Vagina (tissue), 2 donors: ENCODE measurements at regions of chr2 and their contacts with region 1.

Region 1: GRCh38 chr2:96509114-96509846 is 4.1 kb upstream of the NEURL3 start:
- DNase-seq: peak; percentile 86 to 96
- H3K4me3 ChIP-seq: no peak overlapping the region
- H3K27ac ChIP-seq: no peak overlapping the region
- H3K4me1 ChIP-seq: peaks cover 24% of the 10 kb centered on the region
- H3K27me3 ChIP-seq: no peaks in the 10 kb centered on the region
- CTCF ChIP-seq: peak; percentile 71 to 95 (median 88)
- POLR2A ChIP-seq: no peak

Region 2: GRCh38 chr2:96291751-96292150 is 217.5 kb before region 1 on chr2:
- intact Hi-C with region 1: loop called (anchors 10 kb)
- DNase-seq: no peak
- H3K4me3 ChIP-seq: no peak overlapping the region
- H3K27ac ChIP-seq: no peak overlapping the region
- H3K4me1 ChIP-seq: no peaks in the 10 kb centered on the region
- H3K27me3 ChIP-seq: no peaks in the 10 kb centered on the region
- CTCF ChIP-seq: no peak
- POLR2A ChIP-seq: no peak

Region 3: DNA sequence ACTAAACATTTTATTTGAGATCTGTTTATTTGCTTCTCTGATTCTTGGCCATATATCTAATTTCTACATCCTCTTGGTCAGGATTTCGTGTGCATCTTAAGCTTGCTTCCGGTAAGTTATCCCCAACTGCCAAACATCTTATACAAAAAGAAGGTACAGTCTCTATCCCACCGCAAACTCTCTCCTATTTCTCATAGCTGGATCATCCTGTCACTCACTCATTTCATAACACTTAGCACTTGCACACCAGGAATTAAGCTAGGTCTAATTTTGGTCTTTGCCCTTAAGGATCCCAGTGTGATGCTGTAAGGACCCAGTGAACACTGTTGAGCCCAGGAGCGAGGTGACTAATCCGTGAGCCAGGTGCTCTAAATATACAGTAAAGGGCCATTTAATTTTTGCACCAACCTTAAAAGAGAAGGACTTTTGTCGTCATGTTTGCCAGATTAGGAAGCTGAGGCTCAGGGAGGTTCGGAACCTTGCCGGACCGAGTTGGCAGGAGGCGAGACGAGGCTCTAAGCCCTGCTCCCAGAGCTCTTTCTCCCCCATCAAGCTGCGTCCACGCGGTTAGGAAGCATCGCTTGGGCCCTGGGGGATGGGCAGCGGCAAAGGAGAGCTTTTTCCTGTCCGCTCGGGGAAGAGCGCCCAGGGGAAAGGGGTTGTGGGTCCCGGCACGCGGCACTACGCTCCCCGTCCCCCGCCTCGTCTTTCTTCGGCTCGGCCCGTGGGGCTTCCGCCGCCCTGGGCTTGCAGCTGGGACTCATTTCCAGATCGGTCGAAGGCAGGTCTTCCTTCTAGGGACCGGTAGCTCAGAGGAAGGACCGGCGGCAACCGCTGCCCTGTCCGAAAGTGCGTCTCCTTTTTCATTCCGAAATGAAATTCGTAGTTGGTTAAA is 188.3 kb before region 1 on chr2:
- intact Hi-C with region 1: no loop called
- DNase-seq: no peak
- H3K4me3 ChIP-seq: peak overlapping the region; percentile 50 to 54
- H3K27ac ChIP-seq: peak overlapping the region; percentile 9
- H3K4me1 ChIP-seq: peaks cover 30% of the 10 kb centered on the region
- H3K27me3 ChIP-seq: no peaks in the 10 kb centered on the region
- CTCF ChIP-seq: no peak
- POLR2A ChIP-seq: no peak

Region 4: DNA sequence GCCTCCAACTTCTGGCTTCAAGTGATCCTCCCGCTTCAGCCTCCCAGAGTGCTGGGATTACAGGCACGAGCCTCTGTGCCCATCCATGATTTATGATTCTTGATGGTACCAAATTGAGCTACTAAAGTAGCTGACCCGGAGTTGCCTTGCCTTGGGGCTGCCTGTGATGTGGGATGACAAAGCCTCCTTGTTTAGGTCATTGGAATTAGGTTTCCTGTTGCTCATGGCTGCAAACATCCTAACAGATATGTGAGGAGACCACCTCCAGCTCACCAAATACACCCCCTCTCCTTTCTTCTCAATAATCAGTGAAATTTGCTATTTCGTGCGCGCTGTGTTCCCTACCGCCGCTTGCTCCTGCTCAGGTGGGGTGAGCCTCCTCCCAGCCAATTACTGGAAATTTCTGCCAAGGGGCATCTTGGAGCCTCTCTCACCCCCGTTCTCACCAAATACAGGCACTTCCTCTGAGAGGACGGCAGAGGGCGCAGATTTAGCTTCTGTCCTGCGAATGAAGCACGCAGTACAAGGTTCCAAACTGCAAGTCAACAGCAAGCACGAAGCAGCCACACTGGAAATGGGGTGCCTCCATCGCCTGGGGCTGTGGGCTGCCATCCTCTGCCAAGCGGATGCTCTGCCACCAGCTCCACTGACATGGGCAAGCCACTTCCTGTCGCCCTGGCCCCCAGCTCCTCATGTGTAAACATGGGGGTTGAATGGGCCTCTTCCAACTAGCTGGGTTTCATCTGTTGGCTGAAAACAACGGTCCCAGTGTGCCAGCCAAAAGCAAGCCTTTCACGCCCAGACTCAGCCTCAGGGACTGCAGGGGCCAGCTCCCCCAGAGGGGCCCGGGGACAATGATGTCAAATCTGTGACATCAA is 102.0 kb before region 1 on chr2:
- intact Hi-C with region 1: loop called (anchors 5 kb)
- DNase-seq: no peak
- H3K4me3 ChIP-seq: no peak overlapping the region
- H3K27ac ChIP-seq: no peak overlapping the region
- H3K4me1 ChIP-seq: peaks cover 19% of the 10 kb centered on the region
- H3K27me3 ChIP-seq: no peaks in the 10 kb centered on the region
- CTCF ChIP-seq: peak; percentile 47 to 79 (median 72)
- POLR2A ChIP-seq: no peak